Ascending aorta (tissue), 2 donors: ENCODE measurements at regions of chr15 and their contacts with region 1.

Region 1: GRCh38 chr15:34837246-34838016 is 42.1 kb upstream of the ACTC1 start:
- DNase-seq: peak; percentile 44 to 85
- H3K4me3 ChIP-seq: no peak overlapping the region
- H3K27ac ChIP-seq: peak overlapping the region; percentile 36 to 57
- H3K4me1 ChIP-seq: peaks cover 4 to 17% of the 10 kb centered on the region in 2 donors
- H3K27me3 ChIP-seq: no peaks in the 10 kb centered on the region
- CTCF ChIP-seq: no peak

Region 2: GRCh38 chr15:34520566-34520965 is 316.9 kb before region 1 on chr15:
- intact Hi-C with region 1: no loop called
- DNase-seq: no peak
- H3K4me3 ChIP-seq: no peak overlapping the region
- H3K27ac ChIP-seq: no peak overlapping the region
- H3K4me1 ChIP-seq: no peaks in the 10 kb centered on the region
- H3K27me3 ChIP-seq: no peaks in the 10 kb centered on the region
- CTCF ChIP-seq: no peak

Region 3: DNA sequence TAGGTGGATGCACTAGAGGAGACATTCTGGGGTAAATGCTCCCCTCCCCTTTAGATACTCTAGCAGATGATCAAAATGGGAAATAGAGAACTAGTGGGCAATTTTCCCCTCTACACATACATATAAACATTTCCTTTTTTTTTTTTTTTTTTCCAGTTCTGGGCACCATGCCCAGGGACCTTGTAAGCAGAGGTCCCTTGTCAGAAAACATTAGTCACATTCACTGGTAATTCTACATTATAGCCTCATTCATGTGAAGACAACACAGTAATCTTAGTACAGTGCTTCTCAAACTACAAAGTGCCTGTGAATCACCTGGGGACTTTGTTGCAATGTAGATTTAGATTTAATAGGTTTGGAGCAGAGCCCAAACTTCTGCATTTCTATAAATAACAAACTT is 18.0 kb after region 1 on chr15:
- intact Hi-C with region 1: loop called (anchors 1 kb)
- DNase-seq: no peak
- H3K4me3 ChIP-seq: peak overlapping the region in 1 of 2 donors; percentile 3
- H3K27ac ChIP-seq: peak overlapping the region; percentile 64 to 71
- H3K4me1 ChIP-seq: peaks cover 9 to 30% of the 10 kb centered on the region in 2 donors
- H3K27me3 ChIP-seq: no peaks in the 10 kb centered on the region
- CTCF ChIP-seq: no peak

Region 4: DNA sequence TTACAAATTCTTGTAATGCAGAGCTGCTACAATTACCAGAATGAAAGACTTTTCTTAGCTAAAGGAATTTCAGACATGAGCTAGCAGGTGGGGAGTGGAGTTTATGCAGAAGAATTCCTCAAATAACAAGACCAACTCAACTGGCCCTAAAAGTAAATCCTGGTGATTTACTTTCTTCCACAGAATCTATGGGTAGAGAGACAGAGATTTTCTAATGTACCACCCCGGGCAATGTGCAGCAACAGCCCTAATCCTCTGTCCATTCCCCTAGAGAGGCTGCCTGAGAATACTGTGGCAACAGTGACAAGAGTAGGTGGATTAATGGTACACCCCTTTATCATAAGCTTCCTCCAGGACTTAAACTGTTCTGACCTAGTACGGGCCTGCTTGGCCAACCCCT is 76.9 kb after region 1 on chr15:
- intact Hi-C with region 1: loop called (anchors 5 kb)
- DNase-seq: no peak
- H3K4me3 ChIP-seq: no peak overlapping the region
- H3K27ac ChIP-seq: no peak overlapping the region
- H3K4me1 ChIP-seq: no peaks in the 10 kb centered on the region
- H3K27me3 ChIP-seq: no peaks in the 10 kb centered on the region
- CTCF ChIP-seq: no peak